Psoas muscle (tissue), 8 donors: ENCODE measurements at regions of chr6 and their contacts with region 1.

Region 1: DNA sequence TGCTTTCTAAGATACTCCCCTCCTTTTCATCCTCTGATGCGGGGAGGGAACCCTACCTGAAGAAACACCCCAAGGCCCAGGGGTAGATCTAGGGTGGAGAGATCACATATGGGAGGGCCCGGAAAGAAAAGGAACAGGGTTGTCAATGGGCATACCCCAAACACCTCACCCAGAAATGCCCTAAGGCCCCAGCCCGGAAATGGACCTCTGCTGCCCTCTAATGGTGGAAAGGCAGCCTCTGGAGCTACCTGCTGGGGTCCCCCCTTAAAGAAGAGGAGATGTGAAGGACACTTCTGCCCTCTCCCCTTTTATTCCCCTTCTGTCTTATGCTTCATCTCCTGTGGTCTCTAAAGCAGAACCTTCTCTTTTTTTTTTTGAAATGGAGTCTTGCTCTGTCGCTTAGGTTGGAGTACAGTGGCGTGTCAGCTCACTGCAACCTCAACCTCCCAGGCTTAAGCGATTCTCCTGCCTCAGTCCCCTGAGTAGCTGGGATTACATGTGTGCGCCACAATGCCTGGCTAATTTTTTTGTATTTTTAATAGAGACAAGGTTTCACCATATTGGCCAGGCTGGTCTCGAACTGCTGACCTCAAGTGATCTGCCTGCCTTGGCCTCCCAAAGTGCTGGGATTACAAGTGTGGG is 458 bp upstream of the ARMC12 start:
- DNase-seq: peak; percentile 72 to 84
- ATAC-seq: peak; percentile 29 to 57 (median 42)
- H3K4me3 ChIP-seq: no peak overlapping the region
- H3K27ac ChIP-seq: no peak overlapping the region
- H3K4me1 ChIP-seq: peaks cover 36% of the 10 kb centered on the region
- H3K27me3 ChIP-seq: no peaks in the 10 kb centered on the region
- CTCF ChIP-seq: peak; percentile 87

Region 2: DNA sequence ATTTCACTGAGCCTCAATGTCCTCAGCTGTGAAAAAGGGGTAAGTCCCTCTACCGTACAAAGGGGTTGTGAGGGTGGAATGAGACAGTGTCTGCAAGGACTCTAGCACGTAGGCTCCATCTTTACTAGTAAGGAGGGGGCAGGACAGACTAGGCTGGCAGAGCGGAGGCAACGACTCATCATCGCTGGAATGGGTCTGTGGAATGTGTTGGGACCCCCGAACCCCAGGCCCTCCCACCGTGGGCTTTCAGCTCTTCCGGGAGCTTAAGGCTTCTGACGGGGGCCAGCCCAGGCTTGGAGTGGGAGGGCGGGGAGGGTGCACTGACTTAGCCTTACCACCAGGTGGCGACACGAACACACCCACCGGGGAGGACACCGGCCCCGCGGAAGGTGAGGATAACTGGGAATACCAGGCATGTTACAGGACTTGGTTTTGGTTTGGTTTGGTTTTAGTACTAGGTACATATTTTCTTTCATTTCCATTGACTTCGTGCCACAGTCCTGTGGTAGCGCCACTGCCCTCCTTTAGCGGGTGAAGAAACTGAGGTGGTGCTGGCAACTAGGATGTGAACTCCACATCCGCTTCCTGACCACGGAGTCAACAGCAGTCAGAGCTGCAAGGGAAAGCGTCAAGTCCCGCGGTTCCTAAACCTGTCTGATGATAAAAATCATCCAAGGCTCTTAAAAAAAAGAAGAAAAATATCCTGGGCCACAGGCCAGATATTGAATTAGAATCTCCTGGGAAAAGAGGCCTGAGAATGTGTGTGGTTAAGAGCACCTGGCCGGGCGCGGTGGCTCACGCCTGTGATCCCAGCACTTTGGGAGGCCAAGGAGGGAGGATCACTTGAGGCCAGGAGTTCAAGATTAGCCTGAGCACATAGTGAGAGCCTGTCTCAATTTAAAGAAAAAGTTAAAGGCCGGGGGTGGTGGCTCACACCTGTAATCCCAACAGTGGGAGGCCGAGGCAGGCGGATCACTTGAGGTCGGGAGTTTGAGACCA is 213.4 kb before region 1 on chr6:
- intact Hi-C with region 1: loop called (anchors 1 kb)
- DNase-seq: peak; percentile 75 to 88
- ATAC-seq: peak; percentile 89 to 97 (median 94)
- H3K4me3 ChIP-seq: peak overlapping the region; percentile 52
- H3K27ac ChIP-seq: no peak overlapping the region
- H3K4me1 ChIP-seq: no peaks in the 10 kb centered on the region
- H3K27me3 ChIP-seq: no peaks in the 10 kb centered on the region
- CTCF ChIP-seq: peak; percentile 99

Region 3: DNA sequence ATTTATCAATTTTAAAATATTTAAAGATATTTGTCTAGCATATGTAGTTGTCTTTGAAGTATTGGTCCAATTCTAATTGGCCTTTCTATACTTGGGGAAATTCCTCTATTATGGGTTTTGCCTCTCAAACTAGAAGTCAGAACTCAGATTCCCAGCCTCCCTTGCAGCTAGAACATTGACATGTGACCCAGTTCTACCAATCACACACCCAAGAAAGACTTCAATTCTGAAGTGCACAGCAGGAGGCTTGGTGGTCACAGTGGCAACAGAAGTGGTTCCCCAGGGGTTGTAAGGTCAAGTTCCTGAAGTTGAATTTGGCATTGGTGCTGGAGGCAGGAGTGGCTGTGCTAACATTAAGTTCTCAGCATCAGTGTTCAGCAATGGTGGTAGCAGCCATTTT is 32.8 kb before region 1 on chr6:
- intact Hi-C with region 1: no loop called
- DNase-seq: no peak
- ATAC-seq: no peak
- H3K4me3 ChIP-seq: no peak overlapping the region
- H3K27ac ChIP-seq: no peak overlapping the region
- H3K4me1 ChIP-seq: no peaks in the 10 kb centered on the region
- H3K27me3 ChIP-seq: no peaks in the 10 kb centered on the region
- CTCF ChIP-seq: no peak